ENCODE measurements at regions of chr7 and their contacts with region 1.

Region 1: GRCh38 chr7:128462460-128462859 is 6.8 kb downstream of the HILPDA start:
- DNase-seq: no peak
- H3K4me3 ChIP-seq: no peak overlapping the region
- CTCF ChIP-seq: no peak
- POLR2A ChIP-seq: no peak

Region 2: GRCh38 chr7:128425850-128426249 is 36.6 kb before region 1 on chr7:
- intact Hi-C with region 1: loop called (anchors 5 kb)
- DNase-seq: peak; percentile 67 to 94
- H3K4me3 ChIP-seq: no peak overlapping the region
- CTCF ChIP-seq: peak in 1 of 3 donors; percentile 33
- POLR2A ChIP-seq: no peak

Measured in lower leg skin (tissue), 4 donors.